IMR-90 (cell line): ENCODE measurements at regions of chr3 and their contacts with region 1.

Region 1: DNA sequence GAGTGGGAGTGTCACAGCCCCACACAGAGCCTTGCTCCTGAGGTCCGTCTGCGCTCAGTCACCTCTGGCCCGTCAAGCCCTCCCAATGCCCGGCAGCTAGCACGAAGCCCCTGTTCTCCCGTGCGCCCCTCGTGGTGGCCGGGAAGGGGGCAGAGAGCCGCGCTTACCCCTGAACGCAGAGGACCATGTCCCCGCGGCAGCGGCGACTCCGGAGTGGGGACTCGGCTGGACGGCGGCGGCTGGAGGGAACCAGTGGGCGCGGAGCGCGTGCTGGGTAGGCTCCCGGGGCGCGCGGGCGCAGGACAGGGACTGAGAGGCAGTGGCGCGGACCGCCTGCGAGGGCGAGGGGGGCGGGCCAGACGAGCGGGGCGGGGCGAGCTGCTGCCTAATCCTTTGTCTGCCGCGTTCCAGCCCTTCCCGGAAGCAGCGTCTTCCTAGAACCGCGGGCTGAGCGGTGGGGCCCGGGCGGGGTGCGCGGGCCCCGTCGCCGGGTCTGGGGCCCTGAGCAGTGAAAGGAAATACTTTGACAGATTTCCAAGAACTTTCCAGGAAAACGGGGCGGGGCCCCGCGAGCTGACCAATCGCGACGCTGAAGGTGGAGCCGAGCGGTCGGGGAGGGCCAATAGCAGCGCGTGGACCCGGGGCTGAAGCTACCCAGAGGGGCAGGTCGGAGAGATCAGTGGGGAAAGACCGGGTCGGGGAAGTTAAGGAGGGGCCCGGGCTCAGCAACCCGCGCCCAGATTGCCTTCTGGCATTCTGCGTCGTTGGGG is at the start of gene CISH:
- DNase-seq: peak; percentile 91
- ATAC-seq: peak; percentile 82
- H3K4me3 ChIP-seq: peak within 1 kb of the TSS; percentile 81
- H3K27ac ChIP-seq: peak within 1 kb of the TSS; percentile 79
- H3K4me1 ChIP-seq: peaks cover 4% of the 10 kb centered on the region
- H3K27me3 ChIP-seq: no peaks in the 10 kb centered on the region
- CTCF ChIP-seq: peak; percentile 44
- POLR2A ChIP-seq: 0 out of 2 replicates have a peak, but pooled peaks have one; percentile 38
- RAD21 ChIP-seq: peak; percentile 31; the same call in 1 of the 2 replicates
- total RNA-seq, gene CISH: 0.83 and 0.90 TPM in 2 replicates

Region 2: DNA sequence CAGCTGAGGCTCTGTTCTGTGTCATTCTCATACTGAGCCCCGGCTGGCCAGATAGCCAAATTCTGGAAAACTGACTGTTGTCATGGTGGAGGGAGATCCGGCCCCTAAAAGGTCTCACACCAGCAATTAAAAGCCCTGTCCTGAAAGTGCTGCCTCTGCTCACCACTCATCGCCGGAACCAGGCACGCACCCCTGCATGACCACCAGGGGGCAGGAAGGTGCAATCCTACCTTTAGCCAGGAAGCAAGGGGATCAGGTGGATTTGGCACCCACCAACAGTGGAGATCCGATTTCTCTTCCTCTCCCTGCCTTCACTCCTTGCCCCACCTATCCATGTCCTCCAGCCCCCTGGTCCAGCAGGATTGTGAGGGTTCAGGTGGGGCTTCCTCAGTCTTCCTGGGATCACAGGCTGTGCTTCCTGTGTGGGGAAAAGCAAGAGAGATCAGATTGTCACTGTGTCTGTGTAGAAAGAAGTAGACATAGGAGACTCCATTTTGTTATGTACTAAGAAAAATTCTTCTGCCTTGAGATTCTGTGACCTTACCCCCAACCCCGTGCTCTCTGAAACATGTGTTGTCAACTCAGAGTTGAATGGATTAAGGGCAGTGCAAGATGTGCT is 92.1 kb before region 1 on chr3:
- CTCF ChIA-PET with region 1: no interaction called
- POLR2A ChIA-PET with region 1: no interaction called
- dilution Hi-C with region 1: no loop called
- in situ Hi-C with region 1: no loop called
- intact Hi-C with region 1: loop called (anchors 1 kb)
- DNase-seq: peak; percentile 25
- ATAC-seq: peak; percentile 65
- H3K4me3 ChIP-seq: no peak overlapping the region
- H3K27ac ChIP-seq: no peak overlapping the region
- H3K4me1 ChIP-seq: no peaks in the 10 kb centered on the region
- H3K27me3 ChIP-seq: peaks cover 62% of the 10 kb centered on the region
- CTCF ChIP-seq: peak; percentile 69
- POLR2A ChIP-seq: no peak
- RAD21 ChIP-seq: peak; percentile 53

Region 3: GRCh38 chr3:50552598-50552997 is 59.1 kb before region 1 on chr3:
- CTCF ChIA-PET with region 1: no interaction called
- POLR2A ChIA-PET with region 1: no interaction called
- dilution Hi-C with region 1: no loop called
- in situ Hi-C with region 1: no loop called
- intact Hi-C with region 1: no loop called
- DNase-seq: no peak
- ATAC-seq: no peak
- H3K4me3 ChIP-seq: no peak overlapping the region
- H3K27ac ChIP-seq: no peak overlapping the region
- H3K4me1 ChIP-seq: no peaks in the 10 kb centered on the region
- H3K27me3 ChIP-seq: peaks cover 34% of the 10 kb centered on the region
- CTCF ChIP-seq: no peak
- POLR2A ChIP-seq: no peak
- RAD21 ChIP-seq: no peak

Region 4: GRCh38 chr3:50652709-50653108 is 41.1 kb after region 1 on chr3:
- CTCF ChIA-PET with region 1: interaction called, 12 read pairs
- POLR2A ChIA-PET with region 1: no interaction called
- dilution Hi-C with region 1: no loop called
- in situ Hi-C with region 1: no loop called
- intact Hi-C with region 1: loop called (anchors 1 kb)
- DNase-seq: peak; percentile 8
- ATAC-seq: peak; percentile 27
- H3K4me3 ChIP-seq: no peak overlapping the region
- H3K27ac ChIP-seq: no peak overlapping the region
- H3K4me1 ChIP-seq: no peaks in the 10 kb centered on the region
- H3K27me3 ChIP-seq: no peaks in the 10 kb centered on the region; the same call in 1 of the 2 replicates
- CTCF ChIP-seq: peak; percentile 37; the same call in 1 of the 2 replicates
- POLR2A ChIP-seq: no peak
- RAD21 ChIP-seq: peak; percentile 52; the same call in 1 of the 2 replicates

Region 5: GRCh38 chr3:51311055-51311454 is 699.4 kb after region 1 on chr3:
- CTCF ChIA-PET with region 1: interaction called, 6 read pairs
- POLR2A ChIA-PET with region 1: no interaction called
- dilution Hi-C with region 1: no loop called
- in situ Hi-C with region 1: no loop called
- intact Hi-C with region 1: loop called (anchors 1 kb)
- DNase-seq: peak; percentile 33
- ATAC-seq: peak; percentile 64
- H3K4me3 ChIP-seq: no peak overlapping the region
- H3K27ac ChIP-seq: no peak overlapping the region
- H3K4me1 ChIP-seq: no peaks in the 10 kb centered on the region
- H3K27me3 ChIP-seq: peaks cover 4% of the 10 kb centered on the region; the same call in 1 of the 2 replicates
- CTCF ChIP-seq: peak; percentile 42
- POLR2A ChIP-seq: no peak
- RAD21 ChIP-seq: no peak; the same call in 1 of the 2 replicates

Region 6: DNA sequence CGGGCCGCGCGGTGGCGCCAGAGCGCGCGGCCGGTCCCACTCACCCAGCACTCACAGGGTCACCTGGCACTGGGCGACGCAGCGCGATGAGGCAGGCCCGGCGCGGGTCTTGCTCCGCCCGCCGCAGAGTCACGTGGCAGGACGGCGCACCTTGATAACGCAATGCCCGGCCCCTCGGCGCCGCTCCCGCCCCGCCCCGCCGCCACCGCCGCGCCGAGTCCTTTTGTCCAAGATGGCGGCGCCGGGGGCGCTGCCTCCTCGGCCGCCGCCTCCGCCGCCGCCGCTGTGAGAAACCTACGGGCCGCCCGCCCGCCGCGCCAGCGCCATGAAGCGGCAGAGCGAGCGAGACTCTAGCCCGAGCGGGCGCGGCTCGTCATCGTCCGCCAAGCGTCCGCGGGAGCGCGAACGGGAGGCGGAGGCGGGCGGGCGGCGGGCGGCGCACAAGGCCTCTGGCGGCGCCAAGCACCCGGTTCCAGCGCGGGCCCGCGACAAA is 779.5 kb after region 1 on chr3 and contains the start of gene RBM15B:
- CTCF ChIA-PET with region 1: interaction called, 3 read pairs
- POLR2A ChIA-PET with region 1: no interaction called
- dilution Hi-C with region 1: no loop called
- in situ Hi-C with region 1: no loop called
- intact Hi-C with region 1: loop called (anchors 1 kb)
- DNase-seq: peak; percentile 96
- ATAC-seq: peak; percentile 93
- H3K4me3 ChIP-seq: peak within 1 kb of the TSS; percentile 70
- H3K27ac ChIP-seq: peak within 1 kb of the TSS; percentile 85
- H3K4me1 ChIP-seq: peaks cover 34% of the 10 kb centered on the region
- H3K27me3 ChIP-seq: no peaks in the 10 kb centered on the region
- CTCF ChIP-seq: peak; percentile 95
- POLR2A ChIP-seq: peak; percentile 96
- RAD21 ChIP-seq: peak; percentile 37; the same call in 1 of the 2 replicates
- total RNA-seq, gene RBM15B: 17.2 and 17.4 TPM in 2 replicates

Region 7: DNA sequence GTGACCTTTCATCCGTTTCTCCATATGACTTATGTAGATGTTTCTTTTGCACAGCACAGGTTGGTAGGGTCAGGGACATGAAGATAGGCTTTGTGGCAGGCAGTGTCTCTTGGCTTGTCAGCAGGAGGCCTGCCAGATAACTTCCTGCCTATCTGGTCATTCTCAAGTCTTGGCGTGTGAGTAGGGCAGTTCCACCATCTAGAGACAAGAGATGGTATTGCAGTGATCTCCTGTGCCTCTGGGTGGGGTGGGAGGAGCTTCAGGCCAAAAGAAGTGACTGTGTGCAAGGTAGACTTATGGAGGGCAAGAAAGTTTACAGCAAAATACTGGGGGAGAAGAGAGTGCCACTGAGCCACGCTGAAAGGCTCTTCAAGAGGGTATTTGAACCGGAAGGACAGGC is 1070.4 kb after region 1 on chr3:
- CTCF ChIA-PET with region 1: interaction called, 4 read pairs
- POLR2A ChIA-PET with region 1: no interaction called
- dilution Hi-C with region 1: no loop called
- in situ Hi-C with region 1: loop called (anchors 25 kb)
- intact Hi-C with region 1: no loop called
- DNase-seq: peak; percentile 88
- ATAC-seq: peak; percentile 99
- H3K4me3 ChIP-seq: no peak overlapping the region
- H3K27ac ChIP-seq: no peak overlapping the region
- H3K4me1 ChIP-seq: peaks cover 3% of the 10 kb centered on the region; the same call in 1 of the 2 replicates
- H3K27me3 ChIP-seq: no peaks in the 10 kb centered on the region
- CTCF ChIP-seq: peak; percentile 92
- POLR2A ChIP-seq: no peak
- RAD21 ChIP-seq: peak; percentile 93